Caco-2 (cell line): ENCODE measurements at regions of chr10 and their contacts with region 1.

Region 1: DNA sequence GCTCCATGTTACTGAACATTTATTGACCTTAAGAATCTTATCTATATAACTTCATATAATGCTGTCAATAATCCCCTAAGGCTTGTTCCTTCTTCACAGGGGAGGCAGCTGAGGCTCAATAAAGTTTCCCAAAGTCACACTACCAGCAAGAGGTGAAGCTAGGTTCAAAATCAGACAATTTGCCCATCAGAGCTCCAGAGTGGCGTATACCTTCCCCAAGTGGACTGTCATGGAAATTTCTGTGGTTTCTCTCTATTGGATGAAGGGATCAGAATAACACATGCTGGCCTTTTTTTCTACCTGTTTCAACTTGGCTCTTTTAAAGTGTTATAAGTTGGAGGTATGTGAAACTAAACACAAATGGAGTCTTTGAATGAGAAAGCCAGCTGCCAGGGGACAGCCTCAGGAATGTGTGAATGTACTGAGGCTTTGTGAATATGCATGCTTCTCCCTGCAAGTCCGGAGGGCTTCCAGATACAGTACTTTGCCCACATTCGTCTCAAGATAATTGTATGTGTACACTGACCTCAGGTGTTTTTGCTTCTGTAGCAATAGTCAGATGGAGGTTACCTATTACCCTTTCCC is 656.3 kb upstream of the CELF2 start:
- DNase-seq: no peak
- H3K4me3 ChIP-seq: no peak overlapping the region
- H3K4me3 Mint-ChIP-seq: no peak overlapping the region
- H3K27ac Mint-ChIP-seq: no peak overlapping the region
- H3K4me1 ChIP-seq: no peaks in the 10 kb centered on the region
- H3K4me1 Mint-ChIP-seq: no peaks in the 10 kb centered on the region
- H3K27me3 ChIP-seq: no peaks in the 10 kb centered on the region
- H3K27me3 Mint-ChIP-seq: peaks cover 9% of the 10 kb centered on the region
- CTCF ChIP-seq: no peak

Region 2: DNA sequence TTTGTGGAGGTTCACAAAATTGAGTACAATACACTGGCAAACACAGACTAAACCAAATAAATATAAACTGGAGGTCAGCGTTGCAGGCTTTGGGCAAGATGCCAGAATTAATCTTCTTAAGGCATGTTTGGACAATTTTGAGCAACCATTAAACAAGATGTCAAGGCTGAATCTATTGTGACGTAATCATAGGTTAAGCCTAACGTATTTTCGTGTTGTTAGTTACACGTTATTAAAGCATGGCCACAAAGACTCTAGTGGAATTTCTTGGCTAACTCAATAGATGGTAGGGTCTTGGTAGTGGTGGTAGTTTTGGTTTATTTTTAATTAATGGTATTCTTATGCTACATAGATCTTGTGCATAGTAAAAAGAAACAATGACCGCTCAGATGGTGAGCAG is 293.1 kb before region 1 on chr10:
- CTCF ChIA-PET with region 1: no interaction called
- POLR2A ChIA-PET with region 1: no interaction called
- intact Hi-C with region 1: no loop called
- DNase-seq: no peak
- H3K4me3 ChIP-seq: no peak overlapping the region
- H3K4me3 Mint-ChIP-seq: no peak overlapping the region
- H3K27ac Mint-ChIP-seq: no peak overlapping the region
- H3K4me1 ChIP-seq: no peaks in the 10 kb centered on the region
- H3K4me1 Mint-ChIP-seq: no peaks in the 10 kb centered on the region
- H3K27me3 ChIP-seq: no peaks in the 10 kb centered on the region
- H3K27me3 Mint-ChIP-seq: no peaks in the 10 kb centered on the region
- CTCF ChIP-seq: no peak

Region 3: DNA sequence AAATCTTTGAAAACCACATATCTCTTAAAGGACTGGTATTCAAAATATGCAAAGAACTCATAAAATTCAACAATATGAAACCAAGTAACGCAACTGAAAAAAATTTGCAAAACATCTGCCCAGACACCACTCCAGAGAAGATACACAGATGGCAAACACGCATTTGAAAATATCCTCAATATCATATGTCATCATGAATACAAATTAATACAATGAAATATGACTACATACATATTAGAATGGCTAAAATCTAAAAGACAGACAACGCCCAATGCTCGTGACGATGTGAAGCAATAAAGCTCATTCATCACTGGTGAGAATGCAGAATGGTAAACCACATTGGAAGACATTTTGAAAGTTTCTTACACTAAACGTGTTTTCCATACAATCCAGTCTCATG is 113.8 kb before region 1 on chr10:
- CTCF ChIA-PET with region 1: no interaction called
- POLR2A ChIA-PET with region 1: no interaction called
- intact Hi-C with region 1: no loop called
- DNase-seq: no peak
- H3K4me3 ChIP-seq: no peak overlapping the region
- H3K4me3 Mint-ChIP-seq: no peak overlapping the region
- H3K27ac Mint-ChIP-seq: no peak overlapping the region
- H3K4me1 ChIP-seq: no peaks in the 10 kb centered on the region
- H3K4me1 Mint-ChIP-seq: no peaks in the 10 kb centered on the region
- H3K27me3 ChIP-seq: no peaks in the 10 kb centered on the region
- H3K27me3 Mint-ChIP-seq: no peaks in the 10 kb centered on the region
- CTCF ChIP-seq: no peak

Region 4: GRCh38 chr10:10667466-10667865 is 306.1 kb after region 1 on chr10:
- CTCF ChIA-PET with region 1: interaction called, 16 read pairs
- POLR2A ChIA-PET with region 1: no interaction called
- intact Hi-C with region 1: no loop called
- DNase-seq: no peak
- H3K4me3 ChIP-seq: no peak overlapping the region
- H3K4me3 Mint-ChIP-seq: no peak overlapping the region
- H3K27ac Mint-ChIP-seq: no peak overlapping the region
- H3K4me1 ChIP-seq: no peaks in the 10 kb centered on the region
- H3K4me1 Mint-ChIP-seq: no peaks in the 10 kb centered on the region
- H3K27me3 ChIP-seq: no peaks in the 10 kb centered on the region
- H3K27me3 Mint-ChIP-seq: peaks cover 25% of the 10 kb centered on the region
- CTCF ChIP-seq: no peak